Activated T-helper 1 cell treated with anti-CD3 and anti-CD28 coated beads, Interleukin-12 subunit alpha, Interleukin-12 subunit beta, Interleukin-2, Interleukin-4 antibody, amounts not matched to agents 30 ng/mL and 10 ng/mL and 1 ng/mL, durations not matched to agents 14 hours and 24 hours and 36 hours (primary cell): ENCODE measurements at regions of chr1 and their contacts with region 1.

Region 1: GRCh38 chr1:209937996-209938959 is at the start of gene SYT14:
- DNase-seq: no peak
- H3K4me3 Mint-ChIP-seq: peak within 1 kb of the TSS; percentile 57
- H3K27ac Mint-ChIP-seq: peak within 1 kb of the TSS; percentile 19
- H3K4me1 Mint-ChIP-seq: peaks cover 12% of the 10 kb centered on the region
- H3K27me3 Mint-ChIP-seq: peaks cover 51% of the 10 kb centered on the region
- total RNA-seq, gene SYT14: not detected in 2 replicates

Region 2: DNA sequence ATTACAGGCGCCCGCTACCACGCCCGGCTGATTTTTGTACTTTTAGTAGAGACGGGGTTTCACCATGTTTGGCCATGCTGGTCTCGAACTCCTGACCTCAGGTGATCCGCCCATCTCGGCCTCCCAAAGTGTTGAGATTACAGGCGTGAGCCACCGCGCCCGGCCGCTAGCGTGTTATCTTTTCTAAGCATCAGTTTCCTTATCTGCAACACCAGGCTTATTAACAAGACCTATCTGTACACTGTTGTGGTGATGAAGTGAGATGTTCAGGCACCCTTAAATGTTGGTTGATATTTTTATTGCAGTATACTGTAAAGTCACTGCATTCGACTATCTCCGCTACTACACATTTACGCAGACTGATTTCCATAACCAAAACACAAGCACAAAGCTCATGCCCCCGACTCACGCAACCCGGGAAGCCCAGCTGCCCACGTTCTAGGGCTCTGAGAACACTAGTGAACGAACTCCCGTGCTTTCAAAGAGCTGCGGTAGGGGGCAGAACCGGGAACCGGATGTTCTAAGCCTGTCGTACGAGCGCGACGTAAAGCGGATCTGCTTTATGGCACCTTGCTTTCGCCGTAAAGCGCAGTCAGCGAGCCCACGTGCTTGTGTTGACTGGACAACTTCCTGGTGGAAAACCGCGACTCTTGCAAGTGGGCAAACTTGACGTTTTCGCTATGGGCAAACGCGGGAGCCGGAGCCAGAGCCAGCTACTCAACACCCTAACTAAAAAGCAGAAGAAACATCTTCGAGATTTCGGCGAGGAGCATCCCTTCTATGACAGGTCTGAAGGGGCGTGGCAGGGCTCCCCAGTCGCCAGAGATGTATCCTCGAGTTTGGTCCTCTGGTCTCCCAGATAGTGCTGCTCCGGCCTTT is 110.7 kb before region 1 on chr1 and contains the start of gene UTP25:
- intact Hi-C with region 1: loop called (anchors 2 kb)
- DNase-seq: peak; percentile 89
- H3K4me3 Mint-ChIP-seq: peak within 1 kb of the TSS; percentile 93
- H3K27ac Mint-ChIP-seq: peak within 1 kb of the TSS; percentile 90
- H3K4me1 Mint-ChIP-seq: peaks cover 51% of the 10 kb centered on the region
- H3K27me3 Mint-ChIP-seq: peaks cover 9% of the 10 kb centered on the region
- total RNA-seq, gene UTP25: 17.7 and 18.3 TPM in 2 replicates

Region 3: GRCh38 chr1:209860293-209860881 is 77.9 kb before region 1 on chr1:
- intact Hi-C with region 1: no loop called
- DNase-seq: peak; percentile 50
- H3K4me3 Mint-ChIP-seq: no peak overlapping the region
- H3K27ac Mint-ChIP-seq: no peak overlapping the region
- H3K4me1 Mint-ChIP-seq: no peaks in the 10 kb centered on the region
- H3K27me3 Mint-ChIP-seq: peaks cover 18% of the 10 kb centered on the region

Region 4: GRCh38 chr1:209884665-209885117 is 53.6 kb before region 1 on chr1:
- intact Hi-C with region 1: loop called (anchors 1 kb)
- DNase-seq: no peak
- H3K4me3 Mint-ChIP-seq: no peak overlapping the region
- H3K27ac Mint-ChIP-seq: no peak overlapping the region
- H3K4me1 Mint-ChIP-seq: peaks cover 5% of the 10 kb centered on the region
- H3K27me3 Mint-ChIP-seq: peaks cover 17% of the 10 kb centered on the region